ENCODE measurements at regions of chr16 and their contacts with region 1.

Region 1: GRCh38 chr16:30534368-30535105 is at the start of gene ZNF747:
- DNase-seq: peak; percentile 86 to 98 (median 94)

Region 2: DNA sequence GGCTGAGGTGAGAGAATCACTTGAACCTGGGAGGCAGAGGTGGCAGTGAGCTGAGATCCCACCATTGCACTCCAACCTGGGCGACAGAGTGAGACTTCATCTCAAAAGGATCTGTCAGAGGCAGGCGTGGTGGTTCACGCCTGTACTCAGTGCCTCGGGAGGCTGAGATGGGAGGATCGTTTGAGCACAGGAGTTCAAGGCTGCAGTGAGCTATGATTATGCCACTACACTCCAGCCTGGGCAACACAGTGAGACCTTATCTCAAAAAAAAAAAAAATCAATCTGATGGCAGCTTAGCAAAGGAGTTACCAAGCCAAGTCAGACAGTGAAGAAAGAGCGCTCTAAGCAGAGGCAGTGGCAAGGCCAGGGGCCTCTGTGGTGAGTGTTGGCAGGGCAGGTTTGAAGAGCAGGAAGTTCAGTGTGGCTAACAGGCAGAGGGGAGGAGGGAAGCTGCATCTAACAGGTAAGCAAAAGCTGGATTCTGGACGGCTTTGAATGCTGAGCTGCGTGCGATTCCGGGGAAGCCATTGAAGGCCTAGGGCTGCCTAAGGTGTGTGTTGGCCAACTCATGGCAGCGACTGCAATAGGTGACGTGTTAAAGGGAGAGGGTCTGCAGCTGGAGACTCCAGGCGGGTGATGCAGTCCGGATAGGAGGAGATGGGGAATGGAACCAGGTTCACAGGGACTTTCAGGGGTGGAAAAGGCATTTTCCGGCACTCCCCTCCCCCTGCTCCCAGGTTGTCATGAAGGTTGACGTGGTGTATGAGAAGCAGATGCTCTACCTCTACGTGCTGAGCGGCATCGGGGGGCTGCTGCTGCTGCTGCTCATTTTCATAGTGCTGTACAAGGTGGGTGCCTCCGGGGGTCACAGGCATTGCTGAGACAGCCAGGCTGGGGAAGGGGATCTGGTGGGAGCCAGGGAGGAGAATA is 15.2 kb before region 1 on chr16:
- intact Hi-C with region 1: no loop called
- DNase-seq: no peak

Region 3: DNA sequence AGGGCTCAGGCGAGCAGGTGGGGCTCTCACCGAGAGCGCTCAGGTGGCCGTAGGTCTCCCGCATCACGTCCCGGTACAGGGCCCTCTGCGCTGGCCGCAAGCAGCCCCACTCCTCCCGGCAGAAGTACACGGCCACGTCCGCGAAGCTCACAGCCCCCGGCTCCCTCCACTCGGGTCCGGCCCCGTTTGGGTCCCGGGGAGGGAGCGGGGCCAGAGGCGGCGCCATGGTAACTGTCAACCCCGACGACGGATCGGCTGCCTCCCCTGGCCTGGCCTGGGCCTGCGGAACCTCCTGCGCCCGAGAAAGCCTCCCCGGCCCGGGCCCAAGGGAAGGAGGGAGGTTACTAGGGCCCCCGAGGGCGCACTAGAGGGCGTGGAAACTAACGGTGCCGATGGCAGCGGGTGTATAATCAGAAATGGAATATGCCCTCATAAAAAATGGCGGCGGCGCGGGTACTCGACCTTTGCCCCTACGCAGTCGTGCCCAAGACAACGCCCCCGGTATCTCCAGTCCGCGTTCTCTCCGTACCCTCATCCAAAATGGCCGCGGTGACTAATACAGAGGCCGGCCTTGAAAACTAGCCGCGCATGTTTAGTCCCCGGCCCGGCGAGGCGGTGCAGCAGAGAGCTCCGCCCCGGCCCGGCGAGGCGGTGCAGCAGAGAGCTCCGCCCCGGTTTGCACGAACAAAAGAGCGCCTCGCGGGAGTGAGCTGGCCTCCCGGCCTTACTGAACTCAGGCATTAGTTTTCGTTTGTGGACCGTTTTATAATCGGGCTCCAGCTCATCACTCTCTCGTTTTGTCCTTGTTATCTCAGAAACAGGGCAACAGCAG is 23.6 kb after region 1 on chr16 and contains the start of gene ZNF764:
- intact Hi-C with region 1: loop called (anchors 1 kb)
- DNase-seq: peak; percentile 96 to 100 (median 98)

Region 4: GRCh38 chr16:30571695-30572600 is 37.4 kb after region 1 on chr16 and contains the start of gene ZNF688:
- intact Hi-C with region 1: loop called (anchors 5 kb)
- DNase-seq: peak; percentile 88 to 98 (median 95)

Region 5: DNA sequence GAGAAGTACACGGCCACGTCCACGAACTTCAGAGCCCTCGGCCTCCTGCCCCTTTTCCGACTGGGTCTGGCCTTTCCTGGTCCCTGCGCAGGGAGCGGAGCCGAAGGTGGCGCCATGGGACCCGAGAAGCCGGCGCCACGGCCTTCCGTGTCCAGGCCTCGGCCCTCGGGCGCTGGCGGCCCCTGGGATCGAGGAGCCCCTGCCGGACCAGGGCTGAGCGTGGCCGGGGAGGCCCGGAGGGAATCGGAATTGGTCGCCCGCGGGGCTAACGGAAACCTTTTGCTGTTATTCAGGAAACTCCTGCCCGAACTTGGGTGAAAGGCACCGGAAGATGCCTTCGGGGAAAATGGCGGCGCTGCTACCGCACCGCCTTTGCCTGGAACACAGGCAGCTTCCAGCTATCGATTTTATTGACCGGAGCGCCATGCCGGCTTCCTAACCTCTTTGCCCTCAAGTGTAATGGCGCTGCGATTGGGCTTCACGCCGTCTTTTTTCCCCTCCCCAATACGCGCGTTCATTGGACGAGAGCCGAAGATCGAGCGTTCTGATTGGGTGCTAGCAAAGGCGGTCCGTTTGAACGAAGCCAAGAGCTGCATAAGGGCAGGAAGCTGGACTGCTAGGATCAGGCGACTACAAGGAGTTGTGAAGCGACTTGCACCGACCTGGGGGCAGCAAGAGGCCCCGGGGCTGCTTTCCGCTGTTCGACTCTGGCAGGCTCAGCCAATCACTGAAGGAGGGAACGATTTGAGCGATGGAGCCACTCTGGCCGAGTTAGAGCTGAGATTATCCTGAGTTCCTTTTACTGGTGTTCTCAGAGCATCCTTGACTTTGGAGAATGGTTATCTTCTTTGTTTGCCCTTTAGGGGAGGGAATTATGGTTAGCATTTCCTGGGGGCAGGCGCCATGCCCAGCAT is 75.6 kb after region 1 on chr16 and contains the start of gene ZNF689:
- intact Hi-C with region 1: no loop called
- DNase-seq: peak; percentile 91 to 99 (median 97)

Measured in head of caudate nucleus (tissue), 42 donors.